AG04449 (cell line): ENCODE measurements at regions of chr9 and their contacts with region 1.

Region 1: DNA sequence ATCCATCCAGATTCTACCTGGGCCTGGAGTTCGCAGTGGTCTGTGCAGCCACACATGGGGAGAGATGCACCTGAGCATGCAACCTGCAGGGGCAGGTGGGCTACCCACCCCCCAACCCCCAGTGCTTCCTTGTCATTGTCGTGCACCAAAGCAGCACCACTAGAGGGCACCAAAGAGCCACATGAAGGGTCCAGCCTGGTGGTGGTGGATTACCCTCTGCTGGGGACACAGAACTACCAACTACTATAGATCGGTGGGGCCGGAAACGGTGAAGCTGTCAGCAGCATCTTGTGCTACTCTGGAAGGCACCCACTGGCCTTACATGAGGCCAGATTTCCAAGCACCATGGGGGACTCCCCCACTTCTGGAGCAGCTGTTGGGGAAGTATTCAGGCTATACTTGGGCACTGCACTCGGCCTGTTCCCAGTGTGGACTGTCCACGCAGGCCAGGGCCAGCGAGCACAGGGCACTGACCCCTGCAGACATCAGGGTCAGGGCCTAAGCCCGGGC is 60.2 kb upstream of the TBC1D2 start:
- DNase-seq: no peak
- H3K4me3 ChIP-seq: no peak overlapping the region
- CTCF ChIP-seq: peak; percentile 94

Region 2: DNA sequence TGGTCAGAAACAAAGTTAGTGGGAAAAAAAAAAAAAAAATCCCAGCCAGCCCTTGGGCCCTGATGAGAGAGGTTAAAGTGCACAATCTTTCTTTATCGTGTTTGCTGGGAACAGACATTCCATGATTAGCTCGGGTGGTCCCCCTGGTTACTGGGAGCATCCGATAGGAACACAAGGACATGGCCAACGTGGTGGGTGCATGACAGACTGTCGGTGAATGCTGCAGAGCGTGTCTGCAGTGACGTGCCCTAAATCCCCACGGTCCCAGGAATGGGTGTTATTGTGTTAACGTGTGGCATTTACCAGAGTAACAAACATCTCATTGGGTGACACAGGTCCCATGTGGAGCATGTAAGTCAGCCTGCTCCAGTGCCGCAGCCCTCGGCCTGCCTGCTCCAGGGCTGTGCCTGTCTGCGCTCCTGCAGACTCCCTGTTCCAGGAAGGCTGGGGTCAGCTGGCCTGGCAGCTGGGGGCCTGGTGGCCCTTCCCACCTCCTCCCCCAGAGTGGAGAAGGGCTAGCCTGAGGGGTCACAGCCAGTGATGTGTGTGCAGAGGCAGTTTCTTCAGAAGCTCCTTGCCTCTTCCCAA is 25.9 kb before region 1 on chr9:
- CTCF ChIA-PET with region 1: interaction called, 10 read pairs
- POLR2A ChIA-PET with region 1: no interaction called
- DNase-seq: no peak
- H3K4me3 ChIP-seq: no peak overlapping the region
- CTCF ChIP-seq: no peak

Region 3: GRCh38 chr9:98374385-98375051 is 58.9 kb after region 1 on chr9:
- CTCF ChIA-PET with region 1: interaction called, 10 read pairs
- POLR2A ChIA-PET with region 1: no interaction called
- DNase-seq: peak; percentile 77
- H3K4me3 ChIP-seq: peak overlapping the region; percentile 21
- CTCF ChIP-seq: no peak

Region 4: GRCh38 chr9:98570663-98571440 is 255.2 kb after region 1 on chr9:
- CTCF ChIA-PET with region 1: no interaction called
- POLR2A ChIA-PET with region 1: no interaction called
- DNase-seq: no peak
- H3K4me3 ChIP-seq: no peak overlapping the region
- CTCF ChIP-seq: no peak

Region 5: GRCh38 chr9:98707166-98708102 is 391.8 kb after region 1 on chr9:
- CTCF ChIA-PET with region 1: interaction called, 18 read pairs
- POLR2A ChIA-PET with region 1: no interaction called
- DNase-seq: no peak
- H3K4me3 ChIP-seq: peak overlapping the region; percentile 47
- CTCF ChIP-seq: peak; percentile 86

Region 6: DNA sequence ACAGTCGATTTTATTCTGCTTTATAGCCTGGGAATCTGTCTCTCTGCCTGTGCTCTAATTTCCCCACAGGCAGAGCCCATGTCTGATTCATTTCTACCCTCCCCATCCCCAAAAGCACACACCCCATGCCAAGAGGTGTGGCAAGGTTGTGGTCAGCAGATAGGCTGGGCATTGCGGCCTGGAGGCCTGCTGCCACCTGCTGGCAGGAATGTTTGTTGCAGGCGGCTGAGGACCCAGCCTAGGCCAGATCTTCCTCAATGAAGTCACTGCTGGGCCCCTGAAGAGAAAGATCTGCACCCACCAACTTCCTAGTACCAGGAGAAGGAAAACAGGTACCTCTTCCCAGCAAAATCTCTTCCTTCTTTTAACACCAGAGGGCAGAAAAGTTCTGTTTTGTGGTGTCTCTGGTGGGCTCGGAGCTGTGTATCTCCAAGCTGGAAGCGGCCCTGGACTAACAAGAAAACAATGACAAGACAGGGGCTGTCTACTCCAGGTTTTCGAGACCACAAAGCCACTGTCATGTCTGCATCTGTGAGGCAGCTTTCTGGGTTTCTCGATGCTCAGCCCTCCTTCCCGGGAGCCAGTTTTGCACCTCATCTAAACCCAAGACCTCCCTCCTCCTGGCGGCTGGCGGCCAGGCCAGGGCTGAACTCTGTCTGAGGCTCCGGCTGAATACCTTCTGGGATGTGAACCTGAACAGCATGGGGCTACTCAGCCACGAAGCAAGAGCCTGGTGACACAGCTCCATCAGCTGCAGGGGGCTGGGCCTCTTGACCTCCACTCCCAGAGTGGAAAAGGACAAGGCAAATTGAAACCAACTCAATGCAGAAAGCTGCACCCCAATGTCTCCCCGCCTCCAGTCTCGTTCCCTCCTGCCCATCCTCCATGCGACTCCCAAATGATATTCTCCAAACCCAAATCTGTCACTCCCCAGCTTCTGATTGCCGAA is 475.8 kb after region 1 on chr9:
- CTCF ChIA-PET with region 1: interaction called, 13 read pairs
- POLR2A ChIA-PET with region 1: no interaction called
- DNase-seq: peak; percentile 88
- H3K4me3 ChIP-seq: no peak overlapping the region; the same call in 1 of the 2 replicates
- CTCF ChIP-seq: peak; percentile 98